Activated CD8-positive, alpha-beta T cell treated with anti-CD3 and anti-CD28 coated beads, Interleukin-2, amount 10 ng/mL, durations not matched to agents 7 days and 5 days (primary cell): ENCODE measurements at regions of chr22 and their contacts with region 1.

Region 1: DNA sequence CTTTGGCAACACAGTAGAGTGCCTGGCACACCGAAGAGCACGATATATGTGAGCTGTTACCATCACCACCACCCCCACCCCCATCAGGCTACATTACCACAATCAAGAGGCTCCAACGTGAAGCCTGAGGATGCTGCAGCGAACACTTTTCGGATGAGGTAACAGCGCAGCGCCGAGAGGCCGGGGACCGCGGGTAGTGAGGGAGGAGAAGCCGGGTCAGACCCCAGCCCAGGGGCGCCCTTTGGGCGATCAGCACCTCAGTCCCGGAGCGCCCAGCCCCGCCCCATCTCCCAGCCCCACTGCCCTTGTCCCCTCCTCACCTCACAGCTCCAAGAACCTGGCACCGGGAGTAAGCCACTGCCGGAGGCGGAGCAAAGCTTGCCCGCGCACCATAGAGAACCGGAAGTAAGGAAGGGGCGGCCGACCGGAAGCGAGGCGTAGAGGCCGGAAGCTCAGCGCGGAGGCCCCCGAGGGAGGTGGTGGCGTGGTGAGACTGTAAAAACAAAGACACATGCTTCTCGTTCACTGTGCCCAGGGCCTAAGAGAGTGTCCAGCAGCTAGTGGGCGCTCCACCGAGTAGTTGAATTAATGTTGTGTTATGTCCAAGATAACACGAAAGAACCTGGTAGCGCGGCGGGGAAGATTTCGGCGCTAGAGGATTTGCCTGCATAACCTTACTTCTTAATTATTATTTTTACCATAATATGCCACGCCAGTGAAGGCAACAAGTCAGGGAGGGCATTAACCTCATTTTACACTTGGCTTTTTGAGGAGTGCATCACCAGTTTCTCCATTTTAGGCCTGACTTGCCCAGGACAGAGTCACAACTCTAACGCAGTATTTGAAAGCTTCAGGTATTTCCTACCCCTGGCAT is at the start of gene THOC5:
- DNase-seq: peak; percentile 93
- ATAC-seq: peak; percentile 99
- H3K4me3 Mint-ChIP-seq: peak within 1 kb of the TSS; percentile 97
- H3K27ac Mint-ChIP-seq: peak within 1 kb of the TSS; percentile 97
- H3K4me1 Mint-ChIP-seq: peaks cover 30% of the 10 kb centered on the region
- H3K27me3 Mint-ChIP-seq: no peaks in the 10 kb centered on the region
- total RNA-seq, gene THOC5: 53.1 to 60.7 TPM

Region 2: DNA sequence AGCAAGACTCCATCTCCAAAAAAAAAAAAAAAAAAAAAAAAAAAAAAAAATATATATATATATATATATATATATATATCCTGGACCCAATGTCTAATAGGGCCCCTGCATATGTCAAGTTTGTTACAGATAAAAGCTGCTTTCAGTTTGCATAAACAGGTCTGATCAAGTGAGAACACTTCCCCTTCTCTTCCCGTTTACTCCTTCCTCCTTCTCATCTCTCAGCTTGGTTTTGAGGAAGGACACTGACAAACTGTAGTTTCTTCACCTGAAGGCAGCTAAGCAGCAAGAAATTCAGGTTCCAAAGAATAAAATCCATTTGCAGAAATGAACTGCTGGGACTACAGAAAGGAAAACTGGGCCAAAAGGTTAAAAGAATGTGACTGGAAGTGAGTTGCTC is 11.7 kb before region 1 on chr22:
- CTCF ChIA-PET with region 1: interaction called, 11 read pairs
- POLR2A ChIA-PET with region 1: no interaction called
- DNase-seq: no peak
- ATAC-seq: no peak
- H3K4me3 Mint-ChIP-seq: no peak overlapping the region
- H3K27ac Mint-ChIP-seq: no peak overlapping the region
- H3K4me1 Mint-ChIP-seq: peaks cover 12% of the 10 kb centered on the region
- H3K27me3 Mint-ChIP-seq: no peaks in the 10 kb centered on the region

Region 3: DNA sequence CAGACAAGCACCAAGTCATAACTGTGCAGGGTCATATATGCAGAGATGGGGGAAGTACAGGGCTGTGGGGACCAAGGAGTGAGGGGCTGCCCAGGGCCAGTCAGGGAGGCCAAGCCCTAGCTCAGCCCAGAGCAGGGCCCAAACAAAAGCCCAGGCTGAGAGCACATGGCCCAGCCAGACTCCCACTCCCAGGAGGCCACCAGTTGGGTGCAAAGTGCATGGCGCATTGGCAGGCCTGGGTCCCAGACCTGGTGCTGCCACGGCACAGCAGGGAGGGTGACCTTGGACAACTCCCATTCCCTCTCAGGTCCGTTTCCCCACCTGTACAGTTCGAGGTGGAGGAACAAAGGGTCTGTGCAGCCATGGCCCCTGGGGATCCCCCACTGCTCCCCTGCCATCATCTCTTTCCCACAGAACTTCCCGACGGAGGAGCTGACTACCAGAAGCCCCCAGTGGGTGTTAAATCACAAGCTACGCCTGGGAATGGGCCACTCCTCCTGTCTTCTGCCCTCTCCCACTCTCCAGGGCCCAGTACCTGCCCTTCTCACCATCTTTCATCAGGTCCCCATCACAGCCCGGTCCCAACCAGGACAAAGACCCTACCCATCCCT is 26.7 kb after region 1 on chr22:
- CTCF ChIA-PET with region 1: no interaction called
- POLR2A ChIA-PET with region 1: interaction called, 12 read pairs
- DNase-seq: no peak
- ATAC-seq: peak; percentile 12
- H3K4me3 Mint-ChIP-seq: peak overlapping the region; percentile 90
- H3K27ac Mint-ChIP-seq: peak overlapping the region; percentile 94
- H3K4me1 Mint-ChIP-seq: peaks cover 21% of the 10 kb centered on the region
- H3K27me3 Mint-ChIP-seq: no peaks in the 10 kb centered on the region

Region 4: DNA sequence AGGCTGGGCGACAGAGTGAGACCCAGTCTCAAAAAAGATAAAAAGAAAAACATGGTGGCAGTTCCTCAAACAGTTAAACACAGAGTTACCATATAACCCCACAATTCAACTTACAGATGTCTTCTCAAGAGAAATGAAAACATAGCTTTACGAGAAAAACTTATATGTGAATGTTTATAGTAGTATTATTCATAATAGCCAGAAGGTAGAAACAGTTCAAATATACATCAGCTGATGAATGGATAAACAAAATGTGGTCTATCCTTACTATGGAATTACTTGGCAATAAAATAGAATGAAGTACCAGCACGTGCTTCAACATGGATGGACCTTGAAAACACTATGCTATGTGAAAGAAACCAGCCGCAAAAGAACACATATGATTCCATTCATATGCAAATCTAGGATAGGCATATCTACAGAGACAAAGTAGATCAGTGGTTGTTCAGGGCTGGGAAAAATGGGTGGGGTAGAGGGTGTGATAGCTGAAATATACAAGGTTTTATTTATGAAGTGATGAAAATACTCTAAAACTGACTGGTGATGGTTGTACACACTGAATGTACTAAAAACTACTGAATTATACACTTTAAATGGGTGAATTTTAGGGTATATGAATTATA is 62.2 kb after region 1 on chr22:
- CTCF ChIA-PET with region 1: no interaction called
- POLR2A ChIA-PET with region 1: no interaction called
- DNase-seq: no peak
- ATAC-seq: no peak
- H3K4me3 Mint-ChIP-seq: no peak overlapping the region
- H3K27ac Mint-ChIP-seq: no peak overlapping the region
- H3K4me1 Mint-ChIP-seq: peaks cover 13% of the 10 kb centered on the region
- H3K27me3 Mint-ChIP-seq: no peaks in the 10 kb centered on the region

Region 5: DNA sequence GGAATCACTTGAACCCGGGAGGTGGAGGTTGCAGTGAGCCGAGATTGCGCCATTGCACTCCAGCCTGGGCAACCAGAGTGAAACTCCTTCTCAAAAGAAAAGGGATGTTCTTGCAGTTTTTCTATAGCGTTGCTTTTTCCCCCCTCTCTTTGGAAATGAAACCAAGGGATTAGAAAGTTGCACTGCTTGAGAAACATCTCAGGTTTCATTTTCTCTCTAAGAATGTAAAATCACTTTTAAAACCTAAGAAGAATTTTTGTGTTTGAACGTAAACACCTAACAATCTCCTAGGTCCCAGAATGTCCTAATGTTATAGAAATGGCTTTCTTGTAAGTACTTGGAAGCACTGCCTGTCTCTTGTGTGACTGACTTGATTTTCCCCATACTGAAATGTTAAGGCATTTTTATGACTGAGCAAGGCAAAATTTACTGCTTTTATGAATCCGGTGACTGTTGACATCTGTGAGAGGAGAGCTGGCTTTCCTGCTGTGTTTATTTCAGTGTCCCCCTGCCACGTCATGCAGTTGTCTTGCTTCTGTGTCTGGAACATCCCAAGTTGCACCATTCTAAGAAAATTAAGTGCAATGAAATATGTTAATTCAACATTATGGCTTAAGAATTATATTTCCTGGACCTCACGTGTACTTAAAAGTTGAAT is 87.6 kb after region 1 on chr22:
- CTCF ChIA-PET with region 1: no interaction called
- POLR2A ChIA-PET with region 1: no interaction called
- DNase-seq: no peak
- ATAC-seq: no peak
- H3K4me3 Mint-ChIP-seq: no peak overlapping the region
- H3K27ac Mint-ChIP-seq: peak overlapping the region; percentile 26
- H3K4me1 Mint-ChIP-seq: peaks cover 27% of the 10 kb centered on the region
- H3K27me3 Mint-ChIP-seq: no peaks in the 10 kb centered on the region

Region 6: DNA sequence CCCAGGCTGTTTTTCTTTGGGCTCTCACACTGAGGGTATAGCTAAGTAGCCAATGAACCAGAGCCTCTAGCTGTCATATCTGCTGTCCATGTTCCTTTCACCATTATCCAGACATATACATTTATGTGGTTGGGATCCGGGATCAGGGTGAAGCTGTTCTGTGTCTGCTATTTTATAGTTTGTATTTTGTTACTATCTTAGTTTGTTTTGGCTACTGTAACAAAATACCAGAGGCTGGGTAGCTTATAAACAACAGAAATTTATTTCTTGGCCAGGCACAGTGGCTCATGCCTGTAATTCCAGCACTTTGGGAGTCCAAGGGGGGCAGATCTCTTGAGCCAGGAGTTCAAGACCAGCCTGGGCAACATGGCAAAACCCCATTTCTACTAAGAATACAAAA is 125.7 kb after region 1 on chr22:
- CTCF ChIA-PET with region 1: no interaction called
- POLR2A ChIA-PET with region 1: no interaction called
- DNase-seq: no peak
- ATAC-seq: no peak
- H3K4me3 Mint-ChIP-seq: no peak overlapping the region
- H3K27ac Mint-ChIP-seq: no peak overlapping the region
- H3K4me1 Mint-ChIP-seq: no peaks in the 10 kb centered on the region
- H3K27me3 Mint-ChIP-seq: no peaks in the 10 kb centered on the region